ENCODE measurements at regions of chr9 and their contacts with region 1.

Region 1: GRCh38 chr9:79946712-79947111 is 374.9 kb downstream of the TLE4 start:
- DNase-seq: no peak
- ATAC-seq: no peak
- H3K4me3 ChIP-seq: no peak overlapping the region
- H3K4me3 Mint-ChIP-seq: no peak overlapping the region
- H3K27ac ChIP-seq: no peak overlapping the region
- H3K27ac Mint-ChIP-seq: no peak overlapping the region
- H3K4me1 ChIP-seq: no peaks in the 10 kb centered on the region
- H3K4me1 Mint-ChIP-seq: no peaks in the 10 kb centered on the region
- H3K27me3 ChIP-seq: no peaks in the 10 kb centered on the region
- H3K27me3 Mint-ChIP-seq: no peaks in the 10 kb centered on the region
- CTCF ChIP-seq: no peak

Region 2: GRCh38 chr9:78439190-78439865 is 1507.4 kb before region 1 on chr9:
- CTCF ChIA-PET with region 1: no interaction called
- POLR2A ChIA-PET with region 1: no interaction called
- intact Hi-C with region 1: loop called (anchors 2 to 5 kb)
- DNase-seq: peak; percentile 34 to 78 (median 52)
- ATAC-seq: no peak
- H3K4me3 ChIP-seq: no peak overlapping the region
- H3K4me3 Mint-ChIP-seq: no peak overlapping the region
- H3K27ac ChIP-seq: no peak overlapping the region
- H3K27ac Mint-ChIP-seq: no peak overlapping the region
- H3K4me1 ChIP-seq: peaks cover 5% of the 10 kb centered on the region
- H3K4me1 Mint-ChIP-seq: peaks cover 7% of the 10 kb centered on the region
- H3K27me3 ChIP-seq: no peaks in the 10 kb centered on the region
- H3K27me3 Mint-ChIP-seq: peaks cover 46% of the 10 kb centered on the region
- CTCF ChIP-seq: peak; percentile 96

Region 3: DNA sequence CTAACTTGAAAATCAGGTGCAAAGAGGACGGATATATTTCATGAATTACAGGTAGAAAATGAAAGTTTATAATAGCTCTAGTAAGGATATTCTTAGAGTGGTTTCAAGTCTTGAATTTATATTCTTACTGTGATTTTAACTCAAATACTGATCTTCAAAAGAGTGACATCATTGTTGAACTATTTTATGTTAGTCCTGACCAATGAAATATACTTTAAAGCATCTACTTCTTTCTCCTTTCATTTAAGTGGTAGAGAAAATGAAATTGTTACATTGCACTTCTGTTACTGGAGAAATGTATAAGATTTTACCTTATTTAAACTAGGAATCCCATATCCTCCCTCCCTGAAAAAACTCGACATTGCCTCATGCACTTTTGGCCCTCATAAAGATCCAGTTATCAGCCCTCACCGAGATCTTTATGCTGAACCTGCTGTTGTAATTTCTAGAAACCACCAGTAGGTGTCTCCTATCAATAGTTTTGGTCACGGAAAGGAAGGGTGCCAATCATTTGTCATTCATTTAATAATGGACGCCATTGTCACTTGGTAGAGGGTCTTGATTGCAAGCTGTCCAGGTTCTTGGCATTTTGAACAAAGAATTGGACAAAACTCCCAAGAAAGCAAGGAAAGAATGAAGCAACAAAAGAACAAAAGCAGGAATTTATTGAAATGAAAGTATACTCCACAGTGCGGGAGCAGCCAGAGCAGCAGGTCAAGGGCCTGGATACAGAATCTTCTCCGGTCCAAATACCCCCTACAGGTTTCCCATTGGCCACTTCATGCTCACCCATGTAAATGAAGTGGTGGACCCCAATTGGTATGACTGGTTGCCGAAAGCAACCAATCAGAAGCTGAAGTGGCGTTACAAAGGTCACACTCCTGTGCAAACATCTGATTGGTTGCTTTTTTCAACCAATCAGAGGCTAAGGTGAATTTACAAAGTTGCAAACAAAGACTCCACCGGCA is 1125.6 kb before region 1 on chr9:
- CTCF ChIA-PET with region 1: no interaction called
- POLR2A ChIA-PET with region 1: no interaction called
- intact Hi-C with region 1: loop called in 1 of 2 experiments (anchors 10 kb)
- DNase-seq: peak in 3 of 14 experiments; percentile 29 to 32 (median 31)
- ATAC-seq: peak; percentile 24
- H3K4me3 ChIP-seq: no peak overlapping the region
- H3K4me3 Mint-ChIP-seq: peak overlapping the region; percentile 69
- H3K27ac ChIP-seq: no peak overlapping the region
- H3K27ac Mint-ChIP-seq: no peak overlapping the region
- H3K4me1 ChIP-seq: peaks cover 2% of the 10 kb centered on the region
- H3K4me1 Mint-ChIP-seq: peaks cover 4% of the 10 kb centered on the region
- H3K27me3 ChIP-seq: no peaks in the 10 kb centered on the region
- H3K27me3 Mint-ChIP-seq: no peaks in the 10 kb centered on the region
- CTCF ChIP-seq: peak; percentile 74

Region 4: DNA sequence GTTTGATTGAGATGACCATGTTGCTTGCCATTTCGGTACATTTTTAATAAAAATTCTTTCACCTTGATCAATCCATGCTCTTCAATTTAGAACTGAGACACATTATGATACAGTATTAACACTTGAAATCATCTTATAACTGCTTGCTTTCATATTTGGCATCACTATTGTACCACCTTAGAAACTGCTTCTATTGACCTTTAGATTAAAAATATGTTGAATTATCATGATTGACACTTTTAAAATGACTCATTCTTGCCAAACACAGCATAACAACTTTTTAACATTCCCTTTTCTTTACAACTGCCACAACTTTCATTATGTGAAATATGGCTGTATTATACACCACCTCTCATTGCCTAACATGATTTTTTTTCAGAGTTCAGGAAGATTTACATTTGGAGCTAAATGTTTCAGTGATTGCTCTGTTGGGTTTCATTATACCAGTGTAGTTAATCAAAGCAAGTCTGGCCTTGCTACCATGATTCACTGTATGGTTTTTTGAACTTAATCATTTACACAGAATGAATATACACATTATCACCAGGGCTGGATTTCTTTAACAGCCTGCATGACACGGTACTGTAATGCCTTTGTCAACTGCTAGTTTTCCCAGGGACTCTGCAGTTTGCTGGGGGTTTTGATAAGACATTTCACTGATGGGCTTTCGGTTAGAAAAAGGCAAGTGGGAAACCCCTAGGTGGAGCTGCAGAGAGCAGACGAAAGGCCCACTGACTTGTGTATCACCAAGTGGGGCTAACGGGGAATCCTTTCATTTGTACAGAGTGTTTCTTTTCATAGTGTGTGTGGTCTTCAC is 468.5 kb before region 1 on chr9:
- CTCF ChIA-PET with region 1: no interaction called
- POLR2A ChIA-PET with region 1: no interaction called
- intact Hi-C with region 1: loop called (anchors 5 to 10 kb)
- DNase-seq: peak in 7 of 14 experiments; percentile 4 to 48 (median 31)
- ATAC-seq: peak; percentile 62
- H3K4me3 ChIP-seq: no peak overlapping the region
- H3K4me3 Mint-ChIP-seq: no peak overlapping the region
- H3K27ac ChIP-seq: no peak overlapping the region
- H3K27ac Mint-ChIP-seq: no peak overlapping the region
- H3K4me1 ChIP-seq: no peaks in the 10 kb centered on the region
- H3K4me1 Mint-ChIP-seq: no peaks in the 10 kb centered on the region
- H3K27me3 ChIP-seq: no peaks in the 10 kb centered on the region
- H3K27me3 Mint-ChIP-seq: no peaks in the 10 kb centered on the region
- CTCF ChIP-seq: peak; percentile 51

Region 5: GRCh38 chr9:79917421-79917820 is 29.3 kb before region 1 on chr9:
- CTCF ChIA-PET with region 1: no interaction called
- POLR2A ChIA-PET with region 1: no interaction called
- intact Hi-C with region 1: no loop called
- DNase-seq: no peak
- ATAC-seq: no peak
- H3K4me3 ChIP-seq: no peak overlapping the region
- H3K4me3 Mint-ChIP-seq: no peak overlapping the region
- H3K27ac ChIP-seq: no peak overlapping the region
- H3K27ac Mint-ChIP-seq: no peak overlapping the region
- H3K4me1 ChIP-seq: no peaks in the 10 kb centered on the region
- H3K4me1 Mint-ChIP-seq: no peaks in the 10 kb centered on the region
- H3K27me3 ChIP-seq: no peaks in the 10 kb centered on the region
- H3K27me3 Mint-ChIP-seq: no peaks in the 10 kb centered on the region
- CTCF ChIP-seq: no peak